GM10248 (cell line): ENCODE measurements at regions of chr11 and their contacts with region 1.

Region 1: DNA sequence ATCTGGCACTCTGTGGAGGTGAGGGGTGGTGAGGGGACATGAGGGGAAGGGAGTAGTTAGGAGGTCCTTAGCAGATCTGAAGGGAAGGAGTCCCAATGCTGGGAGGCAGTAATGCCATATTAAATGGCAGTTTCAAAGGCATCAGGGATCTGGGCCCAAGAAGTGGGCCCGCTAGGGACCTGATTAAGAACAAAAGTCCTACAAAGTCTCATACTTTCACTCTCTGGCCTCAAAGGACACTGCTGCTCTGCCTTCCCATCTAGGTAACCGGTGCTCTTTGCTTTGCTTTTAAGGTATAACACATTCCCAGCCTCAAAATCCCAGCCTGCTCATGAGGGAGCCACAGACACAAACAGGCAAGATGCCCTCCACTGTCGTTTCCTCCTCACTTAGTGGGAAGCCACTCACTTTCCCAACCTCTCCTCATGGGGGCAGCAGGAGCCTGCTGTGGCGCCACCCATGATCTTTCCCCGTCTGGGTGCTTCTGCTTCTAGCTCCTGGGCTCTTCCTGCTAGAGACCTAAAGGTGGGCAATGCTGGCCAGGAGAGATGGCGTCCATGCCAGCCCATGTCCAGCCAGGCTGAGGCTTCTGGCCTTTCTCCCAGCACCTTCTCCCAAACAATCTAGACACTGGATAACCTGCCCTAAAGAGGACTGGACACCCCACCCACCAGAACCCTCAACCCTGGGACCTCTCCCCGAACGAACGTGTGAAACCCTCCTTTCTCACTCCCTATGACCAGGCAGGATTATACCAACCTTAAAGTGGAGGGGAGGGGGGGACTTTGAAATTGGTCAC is 68.3 kb downstream of the PLEKHA7 start:
- DNase-seq: peak; percentile 78
- CTCF ChIP-seq: peak; percentile 81

Region 2: DNA sequence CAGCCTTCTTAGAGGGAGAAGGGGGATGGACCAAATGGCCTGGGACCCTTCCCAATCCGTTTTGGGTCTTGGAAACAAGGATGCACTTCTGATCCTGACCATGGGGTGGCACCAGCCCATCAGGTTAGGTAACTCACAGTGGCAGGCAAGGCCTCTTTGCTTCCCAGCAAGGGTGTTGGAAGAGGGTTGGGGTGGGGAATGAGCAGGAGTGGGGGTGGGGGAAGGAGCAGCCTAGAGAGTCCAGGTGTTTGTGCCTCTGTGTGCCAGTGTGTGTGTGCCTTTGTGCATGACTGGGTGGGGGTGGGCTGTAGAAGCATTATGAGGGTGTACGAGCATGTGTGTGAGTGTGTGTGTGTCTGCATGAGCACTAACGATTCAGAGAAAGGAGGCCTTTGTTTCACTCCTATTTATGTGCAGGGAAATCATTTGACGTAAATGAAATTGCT is 1618.1 kb before region 1 on chr11:
- CTCF ChIA-PET with region 1: no interaction called
- POLR2A ChIA-PET with region 1: no interaction called
- DNase-seq: peak; percentile 24
- CTCF ChIP-seq: peak; percentile 67

Region 3: GRCh38 chr11:16722581-16723344 is 223.1 kb before region 1 on chr11:
- CTCF ChIA-PET with region 1: no interaction called
- POLR2A ChIA-PET with region 1: no interaction called
- DNase-seq: no peak
- CTCF ChIP-seq: no peak

Region 4: GRCh38 chr11:16902781-16903378 is 43.0 kb before region 1 on chr11:
- CTCF ChIA-PET with region 1: no interaction called
- POLR2A ChIA-PET with region 1: no interaction called
- DNase-seq: peak; percentile 37
- CTCF ChIP-seq: no peak

Region 5: GRCh38 chr11:16923987-16924386 is 21.9 kb before region 1 on chr11:
- CTCF ChIA-PET with region 1: interaction called, 21 read pairs
- POLR2A ChIA-PET with region 1: no interaction called
- DNase-seq: peak; percentile 45
- CTCF ChIP-seq: no peak

Region 6: GRCh38 chr11:16935518-16936302 is 10.2 kb before region 1 on chr11:
- CTCF ChIA-PET with region 1: interaction called, 21 read pairs
- POLR2A ChIA-PET with region 1: no interaction called
- DNase-seq: peak; percentile 51
- CTCF ChIP-seq: peak; percentile 76

Region 7: DNA sequence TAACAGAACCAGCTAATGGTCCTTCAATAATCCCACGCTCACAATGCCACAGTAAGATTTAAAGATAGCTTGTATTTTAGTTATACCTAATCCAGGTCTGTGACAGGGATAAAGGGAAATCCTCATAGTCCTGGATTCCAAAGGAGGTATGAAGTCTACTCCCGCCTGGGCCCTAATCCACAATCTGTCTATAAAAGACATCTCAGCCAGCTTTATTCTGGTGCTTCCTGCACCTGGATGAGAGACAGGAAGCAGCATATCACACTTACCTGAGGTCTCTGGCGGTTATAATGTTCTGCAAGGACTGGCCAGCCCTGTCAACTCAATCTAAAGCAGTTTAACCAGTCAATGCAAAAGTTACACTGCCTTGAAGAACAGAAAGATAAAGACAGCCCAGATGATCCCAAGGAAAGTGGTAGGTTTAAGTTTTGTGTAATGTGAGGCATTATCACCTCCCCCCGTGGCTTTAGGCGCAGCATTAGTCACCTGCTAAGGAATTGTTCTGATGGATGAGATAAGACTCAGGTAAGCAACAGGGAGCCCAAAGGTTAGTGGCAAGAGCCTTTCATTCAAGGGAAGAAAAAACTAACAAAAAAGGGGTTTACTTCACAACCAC is 10.8 kb after region 1 on chr11:
- CTCF ChIA-PET with region 1: interaction called, 14 read pairs
- POLR2A ChIA-PET with region 1: no interaction called
- DNase-seq: no peak
- CTCF ChIP-seq: no peak

Region 8: GRCh38 chr11:17063171-17064002 is 117.5 kb after region 1 on chr11:
- CTCF ChIA-PET with region 1: interaction called, 53 read pairs
- POLR2A ChIA-PET with region 1: no interaction called
- DNase-seq: peak; percentile 68
- CTCF ChIP-seq: peak; percentile 73